ENCODE measurements at regions of chr5 and their contacts with region 1.

Region 1: GRCh38 chr5:73591102-73591695 is 25.7 kb downstream of the UTP15 start:
- DNase-seq: peak; percentile 28
- ATAC-seq: peak; percentile 88
- H3K4me3 ChIP-seq: no peak overlapping the region
- H3K27ac ChIP-seq: no peak overlapping the region
- H3K4me1 ChIP-seq: no peaks in the 10 kb centered on the region
- H3K27me3 ChIP-seq: no peaks in the 10 kb centered on the region
- CTCF ChIP-seq: peak; percentile 62 to 87 (median 71)
- EP300 ChIP-seq: no peak
- POLR2A ChIP-seq: no peak
- RAD21 ChIP-seq: peak; percentile 96

Region 2: DNA sequence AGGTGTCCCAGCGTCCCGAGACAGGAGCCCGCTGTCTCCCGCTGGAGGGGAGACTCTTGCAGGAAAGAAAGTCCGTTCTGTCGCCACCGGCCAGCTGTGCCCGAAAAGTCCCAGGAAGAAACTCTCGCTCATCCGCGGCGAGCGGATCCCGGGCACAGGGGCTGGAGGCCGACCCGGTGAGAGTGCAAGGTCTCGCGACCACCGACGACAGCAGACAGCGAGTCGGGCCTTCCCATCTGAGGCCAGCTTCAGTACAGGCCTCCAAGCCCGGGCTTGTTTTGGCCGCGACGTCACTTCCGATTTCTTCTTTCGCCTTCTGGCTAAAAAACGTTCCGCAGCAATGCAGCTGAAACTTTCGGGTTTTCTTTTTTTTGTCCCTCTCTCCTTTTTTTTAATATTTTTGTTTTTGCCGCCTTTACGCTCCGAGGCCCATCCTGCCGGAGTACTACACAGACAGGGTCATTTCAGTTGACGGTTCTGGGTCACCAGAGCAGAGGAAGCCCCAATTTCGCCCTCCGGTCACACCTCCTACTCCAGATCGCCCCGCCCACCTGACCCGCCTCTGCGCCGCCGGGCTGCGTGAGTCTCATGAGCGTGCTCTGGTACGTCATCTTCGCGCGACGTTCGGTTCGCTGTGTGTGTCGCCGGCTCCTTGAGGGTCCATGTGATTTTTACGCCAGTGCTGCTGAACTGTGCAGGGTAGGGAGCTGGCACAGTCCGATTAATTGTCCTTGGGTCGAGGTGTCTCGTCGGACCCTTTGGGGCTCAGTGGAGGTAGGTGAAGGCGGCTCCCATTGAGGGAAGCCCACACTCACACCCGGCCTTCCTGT is 25.8 kb before region 1 on chr5 and contains the starts of genes ANKRA2 and UTP15:
- CTCF ChIA-PET with region 1: interaction called, 10 read pairs
- POLR2A ChIA-PET with region 1: no interaction called
- RAD21 ChIA-PET with region 1: interaction called, 5 read pairs
- SMC1A ChIA-PET with region 1: interaction called, 19 read pairs
- in situ Hi-C with region 1: no loop called
- intact Hi-C with region 1: no loop called
- DNase-seq: peak; percentile 90
- ATAC-seq: peak; percentile 94
- H3K4me3 ChIP-seq: peak within 1 kb of the TSS; percentile 90
- H3K27ac ChIP-seq: peak within 1 kb of the TSS; percentile 86
- H3K4me1 ChIP-seq: no peaks in the 10 kb centered on the region
- H3K27me3 ChIP-seq: no peaks in the 10 kb centered on the region
- CTCF ChIP-seq: no peak
- EP300 ChIP-seq: 0 out of 4 replicates have a peak, but pooled peaks of 1 of the 2 experiments have one; percentile 11
- POLR2A ChIP-seq: peak; percentile 90
- RAD21 ChIP-seq: no peak
- polyA plus RNA-seq, gene ANKRA2: 19.4 to 31.3 TPM
- polyA plus RNA-seq, gene UTP15: 22.5 to 24.9 TPM

Region 3: GRCh38 chr5:73633060-73633459 is 41.9 kb after region 1 on chr5:
- CTCF ChIA-PET with region 1: interaction called, 15 read pairs
- POLR2A ChIA-PET with region 1: no interaction called
- RAD21 ChIA-PET with region 1: interaction called, 9 read pairs
- SMC1A ChIA-PET with region 1: interaction called, 13 read pairs
- in situ Hi-C with region 1: no loop called
- intact Hi-C with region 1: loop called (anchors 5 kb)
- DNase-seq: no peak
- ATAC-seq: peak; percentile 60
- H3K4me3 ChIP-seq: no peak overlapping the region
- H3K27ac ChIP-seq: no peak overlapping the region
- H3K4me1 ChIP-seq: no peaks in the 10 kb centered on the region
- H3K27me3 ChIP-seq: no peaks in the 10 kb centered on the region
- CTCF ChIP-seq: peak in 1 of 3 experiments; percentile 11; a peak in 1 of 6 replicates
- EP300 ChIP-seq: no peak
- POLR2A ChIP-seq: no peak
- RAD21 ChIP-seq: 0 out of 2 replicates have a peak, but pooled peaks have one; percentile 15

Region 4: DNA sequence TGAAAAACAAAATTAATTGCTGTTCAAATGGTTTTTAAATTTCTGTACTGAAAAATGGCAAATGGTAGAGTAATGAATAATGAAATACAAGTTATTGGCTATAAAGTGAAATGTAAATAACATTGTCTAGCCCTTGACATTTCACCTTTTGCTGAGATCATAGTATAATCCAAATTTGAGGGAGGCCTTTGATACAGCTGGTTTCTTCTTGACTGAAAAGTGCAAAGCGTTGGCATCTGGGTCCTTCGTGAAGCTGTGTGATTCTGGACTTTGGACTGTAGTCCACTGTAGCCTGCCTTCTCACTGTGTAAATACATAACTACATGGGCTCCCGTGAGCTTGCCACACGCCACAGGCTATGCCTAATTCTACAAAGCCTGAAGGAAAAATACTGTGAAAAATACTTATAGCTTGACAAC is 87.1 kb after region 1 on chr5:
- CTCF ChIA-PET with region 1: interaction called, 6 read pairs
- POLR2A ChIA-PET with region 1: no interaction called
- RAD21 ChIA-PET with region 1: interaction called, 12 read pairs
- SMC1A ChIA-PET with region 1: interaction called, 9 read pairs
- in situ Hi-C with region 1: no loop called
- intact Hi-C with region 1: no loop called
- DNase-seq: no peak
- ATAC-seq: peak; percentile 61
- H3K4me3 ChIP-seq: no peak overlapping the region
- H3K27ac ChIP-seq: no peak overlapping the region
- H3K4me1 ChIP-seq: peaks cover 15% of the 10 kb centered on the region
- H3K27me3 ChIP-seq: no peaks in the 10 kb centered on the region
- CTCF ChIP-seq: no peak
- EP300 ChIP-seq: no peak
- POLR2A ChIP-seq: no peak
- RAD21 ChIP-seq: no peak

Region 5: DNA sequence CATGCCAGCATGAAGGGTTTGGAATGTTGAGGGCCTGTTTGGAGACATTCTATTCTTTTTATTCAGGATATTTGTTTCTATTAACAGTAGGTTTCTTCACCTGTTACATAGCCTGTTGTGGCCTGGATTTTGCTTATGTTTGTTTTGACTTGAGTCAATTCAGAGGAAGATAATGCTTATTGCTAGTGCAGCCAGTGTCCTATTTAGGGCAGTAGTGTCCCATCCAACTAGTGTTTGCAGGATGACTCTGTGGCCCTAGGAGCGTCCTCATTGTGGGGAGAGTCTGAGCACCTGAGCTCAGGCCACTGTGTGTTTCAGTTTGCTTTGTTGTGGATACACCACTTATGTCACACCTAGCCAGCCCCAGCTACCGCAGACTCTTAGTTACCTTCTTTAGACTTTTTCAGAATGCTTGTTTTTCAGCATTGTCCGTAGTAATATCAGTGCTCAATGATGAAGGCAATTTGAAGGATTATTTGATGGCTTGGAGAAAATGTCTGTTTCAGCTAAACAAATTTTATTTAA is 125.1 kb after region 1 on chr5:
- CTCF ChIA-PET with region 1: interaction called, 9 read pairs
- POLR2A ChIA-PET with region 1: no interaction called
- RAD21 ChIA-PET with region 1: interaction called, 8 read pairs
- SMC1A ChIA-PET with region 1: interaction called, 24 read pairs
- in situ Hi-C with region 1: no loop called
- intact Hi-C with region 1: no loop called
- DNase-seq: no peak
- ATAC-seq: peak; percentile 96
- H3K4me3 ChIP-seq: no peak overlapping the region
- H3K27ac ChIP-seq: no peak overlapping the region
- H3K4me1 ChIP-seq: no peaks in the 10 kb centered on the region
- H3K27me3 ChIP-seq: no peaks in the 10 kb centered on the region
- CTCF ChIP-seq: 0 out of 6 replicates have a peak, but pooled peaks of 1 of the 3 experiments have one; percentile 2
- EP300 ChIP-seq: no peak
- POLR2A ChIP-seq: no peak
- RAD21 ChIP-seq: no peak

Region 6: GRCh38 chr5:73783828-73784227 is 192.6 kb after region 1 on chr5:
- CTCF ChIA-PET with region 1: interaction called, 565 read pairs
- POLR2A ChIA-PET with region 1: no interaction called
- RAD21 ChIA-PET with region 1: interaction called, 302 read pairs
- SMC1A ChIA-PET with region 1: interaction called, 415 read pairs
- in situ Hi-C with region 1: no loop called
- intact Hi-C with region 1: no loop called
- DNase-seq: no peak
- ATAC-seq: peak; percentile 74
- H3K4me3 ChIP-seq: no peak overlapping the region
- H3K27ac ChIP-seq: no peak overlapping the region
- H3K4me1 ChIP-seq: no peaks in the 10 kb centered on the region
- H3K27me3 ChIP-seq: no peaks in the 10 kb centered on the region; a peak in 1 of 4 replicates
- CTCF ChIP-seq: peak; percentile 18 to 38 (median 29); a peak in 2 of 6 replicates
- EP300 ChIP-seq: no peak
- POLR2A ChIP-seq: no peak
- RAD21 ChIP-seq: no peak

Region 7: DNA sequence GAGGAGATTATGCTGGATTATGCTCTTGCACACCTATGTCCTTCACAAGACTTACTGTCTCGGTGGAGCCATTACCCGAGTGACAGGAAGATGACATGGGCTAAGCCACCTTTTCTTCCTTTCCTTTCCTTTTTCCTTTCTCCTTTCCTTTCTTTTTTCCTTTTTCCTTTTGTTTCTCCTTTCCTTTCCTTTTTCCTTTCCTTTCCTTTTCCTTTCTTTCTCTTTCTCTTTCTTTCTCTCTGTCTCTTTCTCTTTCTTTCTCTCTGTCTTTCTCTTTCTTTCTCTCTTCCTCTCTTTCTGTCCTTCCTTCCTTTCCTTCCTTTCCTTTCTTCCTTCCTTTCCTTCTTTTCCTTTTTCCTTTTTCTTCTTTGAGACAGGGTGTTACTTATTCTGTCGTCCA is 237.3 kb after region 1 on chr5:
- CTCF ChIA-PET with region 1: no interaction called
- POLR2A ChIA-PET with region 1: no interaction called
- RAD21 ChIA-PET with region 1: no interaction called
- SMC1A ChIA-PET with region 1: no interaction called
- in situ Hi-C with region 1: no loop called
- intact Hi-C with region 1: no loop called
- DNase-seq: no peak
- ATAC-seq: no peak
- H3K4me3 ChIP-seq: no peak overlapping the region
- H3K27ac ChIP-seq: no peak overlapping the region
- H3K4me1 ChIP-seq: no peaks in the 10 kb centered on the region
- H3K27me3 ChIP-seq: no peaks in the 10 kb centered on the region
- CTCF ChIP-seq: no peak
- EP300 ChIP-seq: no peak
- POLR2A ChIP-seq: no peak
- RAD21 ChIP-seq: no peak

Region 8: DNA sequence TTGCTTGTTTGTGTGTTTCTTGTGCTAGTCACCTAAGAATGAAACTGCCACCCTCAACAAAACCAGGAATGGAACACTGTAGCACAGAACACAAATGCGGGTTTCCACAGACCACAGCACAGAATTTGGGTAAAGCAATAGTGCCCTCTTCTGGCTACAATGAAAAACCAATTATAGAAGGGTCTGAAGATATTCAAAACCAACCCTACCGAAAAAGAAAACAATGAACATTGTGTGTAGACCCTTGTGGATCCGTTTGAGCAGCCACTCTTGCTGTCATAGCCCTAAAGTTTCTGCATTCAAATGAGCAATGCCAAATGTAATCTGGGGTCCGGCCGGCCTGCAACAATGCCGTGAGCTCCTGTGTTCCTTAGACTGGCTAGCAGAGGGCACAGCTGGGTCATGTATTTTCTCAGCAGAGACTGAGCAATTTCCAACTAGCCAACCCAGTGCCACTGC is 1057.7 kb after region 1 on chr5:
- CTCF ChIA-PET with region 1: interaction called, 8 read pairs
- POLR2A ChIA-PET with region 1: no interaction called
- RAD21 ChIA-PET with region 1: interaction called, 9 read pairs
- SMC1A ChIA-PET with region 1: no interaction called
- in situ Hi-C with region 1: loop called (anchors 5 kb)
- intact Hi-C with region 1: loop called (anchors 2 kb)
- DNase-seq: no peak
- ATAC-seq: peak; percentile 94
- H3K4me3 ChIP-seq: no peak overlapping the region
- H3K27ac ChIP-seq: no peak overlapping the region
- H3K4me1 ChIP-seq: no peaks in the 10 kb centered on the region
- H3K27me3 ChIP-seq: no peaks in the 10 kb centered on the region; a peak in 2 of 4 replicates
- CTCF ChIP-seq: peak; percentile 60 to 73 (median 64)
- EP300 ChIP-seq: no peak
- POLR2A ChIP-seq: no peak
- RAD21 ChIP-seq: peak; percentile 95